Caco-2 (cell line): ENCODE measurements at regions of chr16 and their contacts with region 1.

Region 1: DNA sequence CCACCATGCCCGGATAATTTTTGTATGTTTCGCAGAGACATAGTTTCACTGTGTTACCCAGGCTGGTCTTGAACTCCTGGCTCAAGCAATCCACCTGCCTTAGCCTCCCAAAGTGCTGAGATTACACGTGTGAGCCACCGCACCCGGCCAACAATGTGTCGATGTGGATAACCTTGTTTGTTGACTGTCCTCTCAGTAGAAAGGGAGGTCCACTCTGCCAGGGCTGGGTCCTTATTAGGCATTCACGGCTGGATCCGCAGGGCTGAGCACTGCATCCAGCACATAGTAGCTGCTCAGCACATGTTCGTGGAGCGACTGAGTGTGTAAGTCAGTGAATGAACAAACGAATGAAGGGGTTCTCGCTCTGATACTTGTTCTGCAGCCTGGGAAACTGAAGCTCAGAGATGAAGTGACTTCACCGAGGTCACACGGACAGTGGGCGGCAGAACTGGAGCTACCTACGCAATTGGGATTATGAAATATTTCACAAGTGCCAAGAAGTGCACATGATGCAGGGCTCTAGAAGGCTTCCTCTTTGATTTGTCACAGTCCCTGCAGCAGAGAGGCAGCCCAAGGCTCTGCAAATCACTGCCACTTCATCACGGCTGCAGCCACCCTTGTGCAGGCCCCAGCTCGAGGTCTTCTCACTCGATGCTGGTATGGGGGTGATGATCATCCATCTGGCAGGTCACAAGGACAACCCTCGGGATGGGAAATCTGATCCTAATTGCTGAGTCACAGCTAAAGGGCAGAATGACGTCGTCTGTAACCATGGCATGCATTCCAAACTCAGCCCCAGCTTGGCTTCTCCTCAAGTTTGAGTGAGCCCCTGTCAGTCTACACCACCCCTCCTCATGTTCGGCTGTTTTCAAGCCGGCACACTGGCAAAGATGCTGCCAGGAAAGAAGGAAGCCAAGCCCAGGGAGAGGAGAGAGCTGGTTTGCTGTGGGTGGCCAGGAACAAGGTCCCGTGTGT is 28.0 kb upstream of the SNN start:
- DNase-seq: peak; percentile 44 to 46
- H3K4me3 ChIP-seq: no peak overlapping the region
- H3K4me3 Mint-ChIP-seq: no peak overlapping the region
- H3K27ac Mint-ChIP-seq: peak overlapping the region; percentile 49
- H3K4me1 ChIP-seq: peaks cover 22% of the 10 kb centered on the region
- H3K4me1 Mint-ChIP-seq: peaks cover 5% of the 10 kb centered on the region
- H3K27me3 ChIP-seq: no peaks in the 10 kb centered on the region
- H3K27me3 Mint-ChIP-seq: no peaks in the 10 kb centered on the region
- CTCF ChIP-seq: no peak

Region 2: GRCh38 chr16:11389631-11390212 is 250.5 kb before region 1 on chr16:
- CTCF ChIA-PET with region 1: no interaction called
- POLR2A ChIA-PET with region 1: interaction called, 10 read pairs
- intact Hi-C with region 1: no loop called
- DNase-seq: no peak
- H3K4me3 ChIP-seq: no peak overlapping the region
- H3K4me3 Mint-ChIP-seq: no peak overlapping the region
- H3K27ac Mint-ChIP-seq: no peak overlapping the region
- H3K4me1 ChIP-seq: no peaks in the 10 kb centered on the region
- H3K4me1 Mint-ChIP-seq: no peaks in the 10 kb centered on the region
- H3K27me3 ChIP-seq: no peaks in the 10 kb centered on the region
- H3K27me3 Mint-ChIP-seq: no peaks in the 10 kb centered on the region
- CTCF ChIP-seq: no peak

Region 3: DNA sequence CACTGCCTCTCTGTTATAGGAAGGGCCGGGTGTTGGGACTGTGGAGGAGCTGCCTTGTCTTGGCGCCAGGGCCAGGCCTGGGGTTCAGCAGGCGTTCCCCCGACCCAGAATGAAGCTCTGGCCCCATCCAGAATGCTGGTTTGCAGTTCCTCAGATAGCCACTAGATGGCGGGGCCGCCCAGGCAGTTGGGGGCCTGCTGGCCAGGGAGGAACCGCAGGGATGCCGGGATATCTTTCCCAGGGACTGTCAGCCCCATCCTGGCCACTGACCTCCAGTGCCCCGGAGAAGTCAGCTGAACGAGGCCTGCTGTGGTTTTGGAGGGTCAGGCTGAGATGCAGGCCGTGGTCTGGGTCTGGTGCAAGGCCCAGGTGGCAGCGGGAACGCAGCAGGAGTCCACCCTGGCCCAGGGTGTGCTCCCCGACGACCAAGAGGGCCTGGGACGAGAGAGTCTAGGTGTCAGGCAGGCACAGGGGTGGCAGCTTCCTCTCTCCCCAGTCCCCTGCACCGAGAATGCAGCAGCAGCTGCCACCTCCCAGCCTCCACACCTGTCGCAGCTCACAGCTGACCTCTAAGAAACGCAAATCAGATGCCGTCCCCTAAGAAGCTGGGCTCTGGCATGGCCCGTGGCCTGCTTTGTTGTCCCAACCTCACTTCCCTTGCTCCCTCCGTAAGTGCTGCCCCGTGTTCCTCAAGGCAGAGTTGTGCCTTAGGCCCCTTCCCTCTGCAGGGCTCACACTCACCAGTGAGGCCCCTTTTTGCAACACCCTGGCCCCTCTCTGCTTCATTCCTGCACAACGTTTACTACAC is 243.8 kb before region 1 on chr16:
- CTCF ChIA-PET with region 1: interaction called, 14 read pairs
- POLR2A ChIA-PET with region 1: no interaction called
- intact Hi-C with region 1: loop called (anchors 2 kb)
- DNase-seq: peak; percentile 68 to 83
- H3K4me3 ChIP-seq: no peak overlapping the region
- H3K4me3 Mint-ChIP-seq: no peak overlapping the region
- H3K27ac Mint-ChIP-seq: no peak overlapping the region
- H3K4me1 ChIP-seq: no peaks in the 10 kb centered on the region
- H3K4me1 Mint-ChIP-seq: no peaks in the 10 kb centered on the region
- H3K27me3 ChIP-seq: no peaks in the 10 kb centered on the region
- H3K27me3 Mint-ChIP-seq: no peaks in the 10 kb centered on the region
- CTCF ChIP-seq: peak; percentile 96 to 97

Region 4: GRCh38 chr16:11407047-11407982 is 232.9 kb before region 1 on chr16:
- CTCF ChIA-PET with region 1: interaction called, 9 read pairs
- POLR2A ChIA-PET with region 1: no interaction called
- intact Hi-C with region 1: loop called (anchors 1 kb)
- DNase-seq: peak; percentile 52 to 77
- H3K4me3 ChIP-seq: no peak overlapping the region
- H3K4me3 Mint-ChIP-seq: no peak overlapping the region
- H3K27ac Mint-ChIP-seq: no peak overlapping the region
- H3K4me1 ChIP-seq: no peaks in the 10 kb centered on the region
- H3K4me1 Mint-ChIP-seq: no peaks in the 10 kb centered on the region
- H3K27me3 ChIP-seq: no peaks in the 10 kb centered on the region
- H3K27me3 Mint-ChIP-seq: no peaks in the 10 kb centered on the region
- CTCF ChIP-seq: peak; percentile 68 to 73

Region 5: DNA sequence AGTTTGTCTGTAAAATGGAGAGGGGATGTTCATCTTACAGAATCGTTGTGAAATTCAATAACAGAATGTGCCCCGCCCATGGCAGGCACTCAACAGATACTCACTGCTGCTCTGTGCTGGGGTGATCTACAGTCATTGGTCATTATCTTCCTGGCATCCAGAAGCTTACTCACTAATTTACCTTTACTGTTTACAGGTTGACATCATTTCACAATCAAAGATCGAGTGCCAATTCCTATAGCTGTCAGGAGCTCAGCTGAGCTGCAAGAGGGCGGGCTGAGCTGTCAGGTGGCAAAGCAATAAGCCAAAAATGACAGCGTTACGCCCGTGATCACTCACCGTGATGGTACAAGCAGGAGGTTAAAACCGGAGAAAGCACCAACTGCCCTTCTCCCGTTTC is 104.7 kb before region 1 on chr16:
- CTCF ChIA-PET with region 1: interaction called, 9 read pairs
- POLR2A ChIA-PET with region 1: no interaction called
- intact Hi-C with region 1: loop called (anchors 1 kb)
- DNase-seq: no peak
- H3K4me3 ChIP-seq: no peak overlapping the region
- H3K4me3 Mint-ChIP-seq: no peak overlapping the region
- H3K27ac Mint-ChIP-seq: no peak overlapping the region
- H3K4me1 ChIP-seq: no peaks in the 10 kb centered on the region
- H3K4me1 Mint-ChIP-seq: no peaks in the 10 kb centered on the region
- H3K27me3 ChIP-seq: no peaks in the 10 kb centered on the region
- H3K27me3 Mint-ChIP-seq: no peaks in the 10 kb centered on the region
- CTCF ChIP-seq: no peak

Region 6: DNA sequence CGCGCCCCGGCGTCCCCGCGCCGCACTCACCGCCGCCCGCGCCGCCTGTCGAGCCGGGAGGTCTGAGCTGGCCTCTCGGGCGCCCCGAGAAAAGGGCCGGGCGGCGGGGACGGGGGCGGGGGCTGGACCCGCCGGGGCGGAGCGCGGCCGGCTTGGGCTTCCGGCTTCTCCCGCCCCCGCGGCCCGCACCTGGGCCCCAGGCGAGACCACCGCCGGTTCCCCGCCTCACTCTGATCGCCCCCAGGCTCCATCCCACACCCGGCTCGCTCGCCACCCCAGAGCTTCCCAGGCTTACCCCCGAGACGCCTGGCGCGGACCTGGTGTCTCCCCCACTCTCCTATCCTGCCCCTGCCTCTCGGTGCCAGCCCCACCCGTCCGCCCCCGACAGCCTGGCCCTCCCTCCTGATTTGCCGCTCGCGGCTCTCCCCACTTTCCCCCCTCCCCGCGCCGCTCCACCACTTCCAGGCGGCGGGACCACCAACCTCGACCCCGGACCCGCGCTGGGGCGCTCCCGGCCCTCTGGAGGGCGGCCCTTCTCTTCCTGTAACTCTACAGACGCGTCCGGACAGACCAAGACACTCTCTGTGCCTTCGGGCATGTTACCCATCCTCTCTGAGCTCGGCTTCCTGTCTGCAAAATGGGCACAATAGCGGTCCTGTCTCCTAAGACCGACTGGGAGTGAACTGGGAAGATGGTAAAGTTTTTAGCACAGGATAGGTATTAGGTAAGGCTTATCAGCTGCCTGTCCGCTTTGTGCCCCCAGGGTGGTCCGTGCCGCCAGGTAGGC is 53.2 kb before region 1 on chr16 and contains the start of gene LITAF:
- CTCF ChIA-PET with region 1: interaction called, 8 read pairs
- POLR2A ChIA-PET with region 1: interaction called, 17 read pairs
- intact Hi-C with region 1: loop called (anchors 5 kb)
- DNase-seq: peak; percentile 53 to 74
- H3K4me3 ChIP-seq: peak within 1 kb of the TSS; percentile 89
- H3K4me3 Mint-ChIP-seq: peak within 1 kb of the TSS; percentile 92
- H3K27ac Mint-ChIP-seq: peak within 1 kb of the TSS; percentile 82
- H3K4me1 ChIP-seq: peaks cover 22% of the 10 kb centered on the region
- H3K4me1 Mint-ChIP-seq: no peaks in the 10 kb centered on the region
- H3K27me3 ChIP-seq: no peaks in the 10 kb centered on the region
- H3K27me3 Mint-ChIP-seq: no peaks in the 10 kb centered on the region
- CTCF ChIP-seq: peak in 1 of 2 experiments; percentile 13
- total RNA-seq, gene LITAF: 47.9 and 60.9 TPM in 2 replicates

Region 7: DNA sequence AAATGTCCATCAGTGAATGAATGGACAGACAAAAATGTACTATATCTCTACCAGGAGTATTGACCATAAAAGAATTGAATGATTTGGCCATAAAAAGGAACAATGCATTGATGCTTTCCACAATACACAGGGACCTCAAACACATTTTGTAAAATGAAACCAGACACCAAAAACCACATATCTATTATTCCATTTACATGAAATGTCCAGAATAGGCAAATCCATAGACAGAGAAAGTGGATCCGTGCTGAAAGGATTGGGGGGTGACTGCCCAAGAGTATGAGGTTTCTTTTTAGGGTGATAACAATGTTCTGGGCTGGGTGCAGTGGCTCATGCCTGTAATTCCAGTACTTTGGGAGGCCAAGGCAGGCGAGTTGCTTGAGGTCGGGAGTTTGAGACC is 46.6 kb before region 1 on chr16:
- CTCF ChIA-PET with region 1: interaction called, 3 read pairs
- POLR2A ChIA-PET with region 1: interaction called, 7 read pairs
- intact Hi-C with region 1: loop called (anchors 5 kb)
- DNase-seq: no peak
- H3K4me3 ChIP-seq: no peak overlapping the region
- H3K4me3 Mint-ChIP-seq: no peak overlapping the region
- H3K27ac Mint-ChIP-seq: no peak overlapping the region
- H3K4me1 ChIP-seq: peaks cover 15% of the 10 kb centered on the region
- H3K4me1 Mint-ChIP-seq: peaks cover 7% of the 10 kb centered on the region
- H3K27me3 ChIP-seq: no peaks in the 10 kb centered on the region
- H3K27me3 Mint-ChIP-seq: no peaks in the 10 kb centered on the region
- CTCF ChIP-seq: no peak